ENCODE measurements at regions of chr2 and their contacts with region 1.

Region 1: GRCh38 chr2:55610954-55611743 is 6.3 kb downstream of the PPP4R3B start:
- DNase-seq: no peak
- ATAC-seq: peak; percentile 63
- H3K4me3 Mint-ChIP-seq: no peak overlapping the region
- H3K27ac Mint-ChIP-seq: peak overlapping the region; percentile 77
- H3K4me1 Mint-ChIP-seq: peaks cover 60% of the 10 kb centered on the region
- H3K27me3 Mint-ChIP-seq: no peaks in the 10 kb centered on the region

Region 2: GRCh38 chr2:55590810-55591440 is 20.2 kb before region 1 on chr2:
- CTCF ChIA-PET with region 1: no interaction called
- POLR2A ChIA-PET with region 1: no interaction called
- intact Hi-C with region 1: loop called (anchors 1 to 2 kb)
- DNase-seq: no peak
- ATAC-seq: peak; percentile 99
- H3K4me3 Mint-ChIP-seq: no peak overlapping the region
- H3K27ac Mint-ChIP-seq: peak overlapping the region; percentile 67
- H3K4me1 Mint-ChIP-seq: peaks cover 38% of the 10 kb centered on the region
- H3K27me3 Mint-ChIP-seq: no peaks in the 10 kb centered on the region

Region 3: GRCh38 chr2:55649211-55649610 is 38.1 kb after region 1 on chr2:
- CTCF ChIA-PET with region 1: no interaction called
- POLR2A ChIA-PET with region 1: no interaction called
- intact Hi-C with region 1: no loop called
- DNase-seq: no peak
- ATAC-seq: no peak
- H3K4me3 Mint-ChIP-seq: no peak overlapping the region
- H3K27ac Mint-ChIP-seq: no peak overlapping the region
- H3K4me1 Mint-ChIP-seq: no peaks in the 10 kb centered on the region
- H3K27me3 Mint-ChIP-seq: no peaks in the 10 kb centered on the region